Activated naive CD4-positive, alpha-beta T cell treated with anti-CD3 and anti-CD28 coated beads for 36 hours (primary cell): ENCODE measurements at regions of chr1 and their contacts with region 1.

Region 1: DNA sequence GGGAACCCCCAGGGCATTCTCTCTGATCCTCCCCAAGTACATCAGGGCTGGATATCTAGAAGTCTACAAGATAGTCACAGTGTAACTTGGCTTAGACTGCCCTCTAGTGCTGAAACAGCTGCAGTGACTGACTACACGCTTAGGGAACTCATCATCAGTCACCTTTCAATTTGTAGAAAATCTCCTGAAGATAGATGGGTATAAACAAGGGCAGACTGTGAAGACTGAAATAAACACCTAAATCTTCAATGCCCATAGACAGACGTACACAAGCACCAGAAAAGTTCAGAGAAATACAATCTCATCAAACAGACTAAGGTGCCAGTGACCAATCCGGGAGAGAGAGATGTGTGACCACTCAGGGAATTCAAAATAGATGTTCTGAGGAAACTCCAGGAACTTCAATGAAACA is 46.6 kb downstream of the PACC1 start:
- DNase-seq: peak; percentile 77
- H3K4me3 Mint-ChIP-seq: no peak overlapping the region
- H3K27ac Mint-ChIP-seq: no peak overlapping the region
- H3K4me1 Mint-ChIP-seq: no peaks in the 10 kb centered on the region
- H3K27me3 Mint-ChIP-seq: no peaks in the 10 kb centered on the region

Region 2: GRCh38 chr1:211680752-211681327 is 687.2 kb before region 1 on chr1:
- CTCF ChIA-PET with region 1: no interaction called
- intact Hi-C with region 1: loop called (anchors 1 kb)
- DNase-seq: peak; percentile 80
- H3K4me3 Mint-ChIP-seq: no peak overlapping the region
- H3K27ac Mint-ChIP-seq: peak overlapping the region; percentile 24
- H3K4me1 Mint-ChIP-seq: peaks cover 7% of the 10 kb centered on the region
- H3K27me3 Mint-ChIP-seq: no peaks in the 10 kb centered on the region

Region 3: GRCh38 chr1:211830330-211831142 is 537.5 kb before region 1 on chr1 and contains the start of gene LPGAT1:
- CTCF ChIA-PET with region 1: no interaction called
- intact Hi-C with region 1: loop called (anchors 10 kb)
- DNase-seq: peak; percentile 75
- H3K4me3 Mint-ChIP-seq: peak within 1 kb of the TSS; percentile 82
- H3K27ac Mint-ChIP-seq: peak within 1 kb of the TSS; percentile 75
- H3K4me1 Mint-ChIP-seq: peaks cover 47% of the 10 kb centered on the region
- H3K27me3 Mint-ChIP-seq: no peaks in the 10 kb centered on the region
- total RNA-seq, gene LPGAT1: 18.6 to 21.7 TPM

Region 4: DNA sequence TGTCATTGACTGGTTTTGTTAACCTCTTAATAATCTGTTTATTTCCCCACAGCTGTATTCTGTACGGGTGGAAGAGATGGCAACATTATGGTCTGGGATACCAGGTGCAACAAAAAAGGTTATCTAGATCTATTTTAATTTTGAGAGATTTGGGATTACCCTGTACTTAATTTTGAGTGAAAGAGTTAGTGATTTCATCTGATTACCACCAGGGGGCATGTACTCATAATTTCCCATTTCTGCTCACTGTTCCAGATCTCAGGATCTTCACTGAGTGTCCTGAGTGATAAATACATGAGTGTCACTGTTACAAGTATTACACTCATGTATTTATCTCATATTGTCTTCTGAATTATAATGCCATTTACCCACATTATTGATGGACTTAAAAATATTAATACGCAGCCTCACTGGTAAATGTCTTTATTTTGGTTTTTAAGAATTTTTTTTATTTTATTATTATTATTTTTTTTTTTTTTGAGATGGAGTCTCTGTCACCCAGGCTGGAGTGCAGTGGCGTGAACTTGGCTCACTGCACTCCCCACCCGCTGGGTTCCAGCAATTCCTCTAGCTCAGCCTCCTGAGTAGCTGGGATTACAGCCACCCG is 305.1 kb before region 1 on chr1:
- CTCF ChIA-PET with region 1: interaction called, 10 read pairs
- intact Hi-C with region 1: loop called (anchors 2 kb)
- DNase-seq: no peak
- H3K4me3 Mint-ChIP-seq: no peak overlapping the region
- H3K27ac Mint-ChIP-seq: no peak overlapping the region
- H3K4me1 Mint-ChIP-seq: no peaks in the 10 kb centered on the region
- H3K27me3 Mint-ChIP-seq: no peaks in the 10 kb centered on the region

Region 5: GRCh38 chr1:212162635-212163034 is 205.4 kb before region 1 on chr1:
- CTCF ChIA-PET with region 1: no interaction called
- intact Hi-C with region 1: loop called (anchors 1 kb)
- DNase-seq: peak; percentile 60
- H3K4me3 Mint-ChIP-seq: no peak overlapping the region
- H3K27ac Mint-ChIP-seq: no peak overlapping the region
- H3K4me1 Mint-ChIP-seq: peaks cover 32% of the 10 kb centered on the region
- H3K27me3 Mint-ChIP-seq: no peaks in the 10 kb centered on the region

Region 6: DNA sequence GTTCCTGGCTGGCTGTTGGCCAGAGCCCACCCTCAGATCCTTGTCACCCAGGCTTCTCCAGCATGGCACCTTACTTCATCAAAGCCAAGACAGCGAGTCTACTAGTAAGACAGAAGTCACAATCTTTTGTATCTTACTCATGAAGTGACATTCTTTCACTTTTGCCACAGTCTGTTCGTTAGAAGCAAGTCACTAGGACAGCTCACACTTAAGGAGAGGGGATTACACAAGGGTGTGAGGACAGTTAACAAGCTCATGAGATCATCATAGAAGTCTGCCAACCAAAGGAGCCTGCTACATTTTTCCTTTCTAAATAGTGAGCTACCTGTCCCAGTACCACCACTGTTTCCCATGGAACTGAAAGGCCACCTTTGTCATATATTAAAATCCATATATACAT is 14.9 kb before region 1 on chr1:
- CTCF ChIA-PET with region 1: interaction called, 11 read pairs
- intact Hi-C with region 1: no loop called
- DNase-seq: no peak
- H3K4me3 Mint-ChIP-seq: no peak overlapping the region
- H3K27ac Mint-ChIP-seq: peak overlapping the region; percentile 38
- H3K4me1 Mint-ChIP-seq: no peaks in the 10 kb centered on the region
- H3K27me3 Mint-ChIP-seq: no peaks in the 10 kb centered on the region

Region 7: DNA sequence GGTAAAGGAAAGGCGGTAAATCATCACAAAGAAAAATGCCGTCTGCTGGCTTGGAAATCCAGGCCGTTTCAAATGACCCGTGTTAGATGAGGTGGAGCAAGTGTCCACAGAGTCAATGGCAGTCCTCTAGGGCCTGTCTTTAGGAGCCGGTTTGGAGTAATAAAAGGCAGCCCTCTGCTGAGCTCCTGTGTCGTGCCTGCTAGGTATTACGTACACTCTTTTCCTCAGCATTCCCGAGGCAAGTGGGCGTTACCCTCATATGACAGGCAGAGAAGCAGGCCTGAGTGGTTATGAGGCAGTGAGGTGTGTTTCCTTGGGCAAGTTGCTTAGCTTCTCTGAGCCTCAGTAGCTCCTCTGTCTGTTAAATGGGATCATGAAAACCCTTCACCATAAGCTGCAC is 72.3 kb after region 1 on chr1:
- CTCF ChIA-PET with region 1: no interaction called
- intact Hi-C with region 1: no loop called
- DNase-seq: no peak
- H3K4me3 Mint-ChIP-seq: no peak overlapping the region
- H3K27ac Mint-ChIP-seq: no peak overlapping the region
- H3K4me1 Mint-ChIP-seq: peaks cover 12% of the 10 kb centered on the region
- H3K27me3 Mint-ChIP-seq: no peaks in the 10 kb centered on the region